Activated CD8-positive, alpha-beta T cell treated with anti-CD3 and anti-CD28 coated beads, Interleukin-2, amount 10 ng/mL, durations not matched to agents 7 days and 5 days (primary cell): ENCODE measurements at regions of chr9 and their contacts with region 1.

Region 1: DNA sequence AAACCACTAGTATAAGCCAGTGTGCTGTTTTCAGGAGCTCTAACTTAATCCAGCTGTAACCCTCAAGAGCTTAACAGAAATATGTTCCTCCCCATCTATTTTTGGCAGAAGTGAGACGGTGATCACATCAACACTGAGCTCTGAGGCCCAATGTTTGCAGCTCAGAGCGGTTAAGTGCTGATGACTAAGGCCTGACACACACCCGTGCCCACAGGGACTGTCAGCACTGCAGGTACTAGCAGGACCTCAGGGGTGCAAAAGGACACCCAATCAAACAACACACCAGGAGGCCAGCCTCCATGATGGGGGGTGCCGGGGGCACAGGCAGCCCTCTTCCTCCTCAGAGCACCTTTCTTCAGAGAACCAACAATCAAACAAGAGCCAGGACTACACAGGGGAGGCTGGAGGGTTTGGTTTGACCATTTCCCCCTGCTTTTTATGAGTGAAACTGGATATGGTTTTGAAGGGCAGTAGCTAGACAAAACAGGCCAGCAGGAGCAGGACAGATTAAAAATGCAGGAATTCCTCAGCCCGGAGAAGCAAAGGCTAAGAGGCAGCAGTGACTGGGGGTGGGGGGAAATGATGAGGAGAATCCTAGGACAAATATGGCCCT is 61.3 kb downstream of the RAPGEF1 start:
- DNase-seq: peak; percentile 84
- ATAC-seq: peak; percentile 97
- H3K4me3 Mint-ChIP-seq: peak overlapping the region; percentile 37
- H3K27ac Mint-ChIP-seq: peak overlapping the region; percentile 91
- H3K4me1 Mint-ChIP-seq: peaks cover 81% of the 10 kb centered on the region
- H3K27me3 Mint-ChIP-seq: no peaks in the 10 kb centered on the region

Region 2: DNA sequence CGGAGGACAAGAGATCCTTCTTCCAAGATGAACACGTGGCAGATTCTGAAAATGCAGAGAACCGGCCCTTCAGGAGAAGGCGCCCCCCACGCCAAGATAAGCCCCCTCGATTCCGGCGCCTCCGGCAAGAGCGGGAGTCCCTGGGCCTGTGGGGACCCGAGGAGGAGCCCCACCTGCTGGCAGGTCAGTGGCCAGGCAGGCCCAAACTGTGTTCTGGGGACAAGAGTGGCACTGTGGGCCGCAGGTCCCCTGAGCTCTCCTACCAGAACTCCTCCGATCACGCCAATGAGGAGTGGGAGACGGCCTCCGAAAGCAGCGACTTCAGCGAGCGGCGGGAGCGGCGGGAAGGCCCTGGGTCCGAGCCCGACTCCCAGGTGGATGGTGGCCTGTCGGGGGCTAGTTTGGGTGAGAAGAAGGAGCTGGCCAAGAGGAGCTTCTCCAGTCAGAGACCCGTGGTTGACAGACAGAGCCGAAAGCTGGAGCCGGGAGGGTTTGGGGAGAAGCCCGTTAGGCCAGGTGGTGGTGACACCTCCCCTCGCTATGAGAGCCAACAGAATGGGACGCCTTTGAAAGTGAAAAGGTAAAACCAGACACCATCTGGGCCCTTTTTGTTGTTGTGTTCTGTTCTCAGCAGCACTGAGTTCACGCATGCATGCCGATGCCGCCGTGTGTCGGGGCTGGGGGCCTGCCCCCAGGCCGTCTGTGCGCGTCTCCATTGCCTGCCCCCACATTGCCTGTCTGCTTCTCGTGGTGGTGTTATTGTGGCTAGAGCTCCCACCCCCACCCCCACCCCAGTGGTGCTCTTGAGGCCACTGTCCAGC is 202.4 kb before region 1 on chr9:
- CTCF ChIA-PET with region 1: no interaction called
- POLR2A ChIA-PET with region 1: no interaction called
- DNase-seq: no peak
- ATAC-seq: no peak
- H3K4me3 Mint-ChIP-seq: no peak overlapping the region
- H3K27ac Mint-ChIP-seq: no peak overlapping the region
- H3K4me1 Mint-ChIP-seq: no peaks in the 10 kb centered on the region
- H3K27me3 Mint-ChIP-seq: no peaks in the 10 kb centered on the region

Region 3: GRCh38 chr9:131641618-131642495 is 36.7 kb before region 1 on chr9:
- CTCF ChIA-PET with region 1: interaction called, 11 read pairs
- POLR2A ChIA-PET with region 1: interaction called, 3 read pairs
- DNase-seq: no peak
- ATAC-seq: no peak
- H3K4me3 Mint-ChIP-seq: no peak overlapping the region
- H3K27ac Mint-ChIP-seq: no peak overlapping the region
- H3K4me1 Mint-ChIP-seq: peaks cover 28% of the 10 kb centered on the region
- H3K27me3 Mint-ChIP-seq: no peaks in the 10 kb centered on the region

Region 4: DNA sequence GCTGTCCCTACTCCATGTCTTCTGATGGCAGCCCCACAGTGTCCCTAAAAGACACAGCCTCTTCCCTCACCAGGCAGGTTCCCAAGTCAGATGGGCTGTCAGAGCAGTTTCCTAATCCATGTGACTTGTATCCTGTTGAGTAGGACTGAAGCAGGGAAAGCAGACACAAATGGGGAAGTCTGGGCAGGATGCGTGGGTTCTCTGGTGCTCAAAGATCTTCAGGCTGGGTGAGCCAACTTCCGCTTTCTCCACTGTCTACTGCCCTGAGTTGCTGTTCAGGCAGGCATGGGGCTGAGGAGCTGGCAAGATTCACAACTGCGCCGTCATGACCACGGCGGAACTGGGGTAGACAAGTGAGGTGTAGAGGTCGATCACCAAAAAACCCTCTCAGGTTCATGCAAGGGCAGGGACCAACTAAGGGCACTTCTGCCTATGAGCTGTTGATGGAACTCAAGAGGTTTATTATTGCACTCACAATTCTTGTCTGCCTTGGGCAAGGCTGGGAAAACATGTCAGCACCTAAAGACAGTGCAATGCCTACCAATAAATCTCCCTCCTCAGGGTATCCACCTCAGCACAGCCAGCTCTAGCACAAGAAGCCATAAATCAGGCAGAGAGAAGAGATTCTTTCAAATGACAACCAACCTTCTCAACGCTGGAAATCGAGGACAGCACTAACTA is 22.1 kb before region 1 on chr9:
- CTCF ChIA-PET with region 1: interaction called, 3 read pairs
- POLR2A ChIA-PET with region 1: interaction called, 11 read pairs
- DNase-seq: peak; percentile 80
- ATAC-seq: peak; percentile 95
- H3K4me3 Mint-ChIP-seq: peak overlapping the region; percentile 13
- H3K27ac Mint-ChIP-seq: peak overlapping the region; percentile 84
- H3K4me1 Mint-ChIP-seq: peaks cover 65% of the 10 kb centered on the region
- H3K27me3 Mint-ChIP-seq: no peaks in the 10 kb centered on the region

Region 5: DNA sequence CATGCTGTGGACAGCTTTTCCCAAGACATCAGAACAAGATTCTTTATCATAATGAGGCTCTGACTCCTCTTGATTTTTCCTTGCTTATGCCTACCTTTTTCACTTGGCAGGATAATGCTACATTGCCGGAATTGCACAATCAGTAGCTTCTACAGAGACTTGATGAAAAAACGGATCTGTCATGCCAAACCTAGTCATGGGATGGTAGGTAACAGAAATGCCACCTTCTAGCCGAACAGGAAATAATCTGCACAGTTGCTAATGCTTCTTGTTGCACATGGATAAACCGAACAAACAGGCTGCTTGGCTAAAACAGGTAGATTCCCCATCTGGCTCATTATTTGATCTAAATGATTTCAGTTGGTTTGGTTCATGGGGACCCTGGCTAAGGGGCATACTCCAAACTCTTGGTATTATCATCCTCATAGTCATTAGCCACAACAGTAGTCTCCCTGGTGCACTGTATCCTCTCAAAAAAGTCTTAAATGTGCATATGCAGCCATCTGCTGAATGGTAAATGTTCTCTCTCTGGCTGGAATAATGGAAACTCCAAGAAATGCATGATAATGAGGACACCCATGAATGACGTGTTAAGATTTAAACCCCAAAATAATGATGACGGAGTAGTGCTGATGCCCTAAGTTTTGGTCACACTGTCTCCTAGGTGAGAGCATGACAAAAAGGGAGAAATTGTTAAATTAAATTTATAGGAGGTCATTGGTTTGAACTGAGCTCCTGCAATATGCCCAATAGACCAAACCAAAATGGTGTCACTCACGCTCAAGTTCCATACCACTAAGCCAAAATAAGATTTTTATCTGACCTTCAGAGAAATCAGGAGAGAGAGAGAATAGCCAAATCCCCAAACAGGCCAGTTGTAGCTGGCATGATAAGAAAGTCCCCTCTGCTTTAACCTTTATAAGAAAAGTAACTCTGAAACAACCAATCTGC is 14.3 kb after region 1 on chr9:
- CTCF ChIA-PET with region 1: interaction called, 13 read pairs
- POLR2A ChIA-PET with region 1: interaction called, 3 read pairs
- DNase-seq: no peak
- ATAC-seq: no peak
- H3K4me3 Mint-ChIP-seq: no peak overlapping the region
- H3K27ac Mint-ChIP-seq: no peak overlapping the region
- H3K4me1 Mint-ChIP-seq: peaks cover 88% of the 10 kb centered on the region
- H3K27me3 Mint-ChIP-seq: no peaks in the 10 kb centered on the region

Region 6: GRCh38 chr9:131709771-131710454 is 31.3 kb after region 1 on chr9:
- CTCF ChIA-PET with region 1: interaction called, 29 read pairs
- POLR2A ChIA-PET with region 1: interaction called, 17 read pairs
- DNase-seq: no peak
- ATAC-seq: peak; percentile 80
- H3K4me3 Mint-ChIP-seq: peak overlapping the region; percentile 26
- H3K27ac Mint-ChIP-seq: peak overlapping the region; percentile 63
- H3K4me1 Mint-ChIP-seq: peaks cover 70% of the 10 kb centered on the region
- H3K27me3 Mint-ChIP-seq: no peaks in the 10 kb centered on the region